ENCODE measurements at regions of chr11 and their contacts with region 1.

Region 1: GRCh38 chr11:77047007-77047927 is 13.1 kb downstream of the B3GNT6 start:
- DNase-seq: peak in 1 of 2 donors; percentile 91
- ATAC-seq: peak; percentile 84 to 97 (median 93)
- H3K4me3 ChIP-seq: peak overlapping the region in 8 of 10 donors; percentile 28 to 52 (median 42)
- H3K27ac ChIP-seq: peak overlapping the region in 2 of 10 donors; percentile 8 to 37
- H3K4me1 ChIP-seq: peaks cover 0 to 16% (median 6%) of the 10 kb centered on the region in 9 donors
- H3K27me3 ChIP-seq: peaks cover 0 to 35% (median 32%) of the 10 kb centered on the region in 7 donors
- CTCF ChIP-seq: peak; percentile 66 to 83 (median 75)

Region 2: GRCh38 chr11:77082838-77083562 is 35.7 kb after region 1 on chr11:
- intact Hi-C with region 1: loop called in 1 of 10 experiments (anchors 5 kb)
- DNase-seq: peak; percentile 54 to 62
- ATAC-seq: peak; percentile 42 to 87 (median 82)
- H3K4me3 ChIP-seq: peak overlapping the region in 3 of 10 donors; percentile 3 to 20 (median 14)
- H3K27ac ChIP-seq: peak overlapping the region in 9 of 10 donors; percentile 33 to 83 (median 60)
- H3K4me1 ChIP-seq: peaks cover 9 to 28% (median 18%) of the 10 kb centered on the region in 9 donors
- H3K27me3 ChIP-seq: no peaks in the 10 kb centered on the region
- CTCF ChIP-seq: no peak

Region 3: DNA sequence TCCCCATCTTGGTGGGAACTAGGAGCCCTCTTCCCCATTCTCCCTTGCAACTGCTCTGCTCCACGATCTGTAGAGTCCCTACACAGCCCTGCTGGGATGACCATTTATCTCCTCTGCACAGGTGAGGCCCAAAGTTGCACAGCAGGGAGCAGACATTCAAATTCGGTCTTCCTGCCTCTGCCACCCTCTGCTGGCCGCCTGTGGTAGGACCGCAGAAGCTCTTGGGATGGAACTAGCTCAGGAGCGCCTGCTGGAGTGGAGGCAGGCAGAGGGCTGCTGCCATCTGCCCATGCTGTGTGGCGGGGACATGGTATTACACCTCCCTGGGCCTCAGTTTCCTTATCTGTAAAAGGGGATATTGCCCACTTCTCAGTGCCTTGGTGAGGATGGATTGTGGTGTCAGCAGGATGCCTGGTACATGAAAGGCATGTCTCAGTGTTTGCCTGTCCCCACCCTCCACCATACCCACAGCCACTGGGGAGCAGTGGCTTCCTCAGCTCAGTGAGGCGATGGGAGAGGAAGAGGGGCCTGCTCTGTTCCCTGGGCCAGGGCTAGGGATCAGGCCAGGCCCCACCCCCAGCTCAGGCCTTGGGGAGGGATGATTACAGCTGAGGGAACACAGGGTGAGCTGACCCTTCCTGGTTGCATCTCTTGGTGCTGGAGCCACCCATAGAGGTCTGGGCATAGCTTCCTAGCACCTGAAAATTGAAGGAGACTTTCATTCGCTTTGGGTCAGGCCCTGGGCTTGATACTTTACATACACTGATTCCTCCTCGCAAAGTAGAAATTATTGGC is 44.1 kb after region 1 on chr11:
- intact Hi-C with region 1: loop called (anchors 1 to 5 kb)
- DNase-seq: peak; percentile 78 to 80
- ATAC-seq: peak; percentile 68 to 80 (median 78)
- H3K4me3 ChIP-seq: no peak overlapping the region
- H3K27ac ChIP-seq: no peak overlapping the region
- H3K4me1 ChIP-seq: peaks cover 0 to 8% (median 0%) of the 10 kb centered on the region in 9 donors
- H3K27me3 ChIP-seq: no peaks in the 10 kb centered on the region
- CTCF ChIP-seq: peak; percentile 80 to 94 (median 91)

Region 4: DNA sequence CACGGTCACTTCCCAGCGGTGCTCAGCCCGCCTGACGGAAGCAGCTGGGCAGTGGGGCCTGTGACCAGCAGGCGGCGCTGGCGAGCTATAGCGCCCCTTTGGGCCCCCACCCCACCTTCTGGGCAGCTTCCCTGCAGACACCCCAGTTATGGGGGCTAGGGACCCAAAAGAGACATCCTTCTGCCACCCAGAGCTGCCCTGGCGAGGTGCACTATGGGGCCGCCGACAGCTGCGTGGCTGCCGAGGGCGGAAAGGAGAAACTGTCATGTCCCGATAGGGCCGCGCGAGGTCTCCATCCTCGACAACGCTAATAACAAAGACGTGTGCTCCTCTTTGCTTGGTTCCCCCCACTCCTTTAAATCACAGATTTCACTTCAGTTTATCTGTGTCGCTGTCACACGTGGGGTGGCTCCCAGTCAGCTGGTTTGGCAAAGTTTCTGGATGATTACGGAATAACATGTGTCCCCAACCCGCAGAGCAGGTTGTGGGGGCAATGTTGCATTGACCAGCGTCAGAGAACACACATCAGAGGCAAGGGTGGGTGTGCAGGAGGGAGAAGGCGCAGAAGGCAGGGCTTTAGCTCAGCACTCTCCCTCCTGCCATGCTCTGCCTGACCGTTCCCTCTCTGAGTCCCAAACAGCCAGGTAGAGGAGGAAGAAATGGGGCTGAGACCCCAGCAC is 80.1 kb after region 1 on chr11:
- intact Hi-C with region 1: loop called in 1 of 10 experiments (anchors 10 kb)
- DNase-seq: peak; percentile 35 to 67
- ATAC-seq: peak; percentile 62 to 86 (median 74)
- H3K4me3 ChIP-seq: peak overlapping the region in 9 of 10 donors; percentile 8 to 56 (median 46)
- H3K27ac ChIP-seq: peak overlapping the region in 4 of 10 donors; percentile 2 to 53 (median 32)
- H3K4me1 ChIP-seq: peaks cover 6 to 43% (median 27%) of the 10 kb centered on the region in 9 donors
- H3K27me3 ChIP-seq: peaks cover 0 to 9% (median 0%) of the 10 kb centered on the region in 7 donors
- CTCF ChIP-seq: peak; percentile 96 to 100 (median 99)

Region 5: DNA sequence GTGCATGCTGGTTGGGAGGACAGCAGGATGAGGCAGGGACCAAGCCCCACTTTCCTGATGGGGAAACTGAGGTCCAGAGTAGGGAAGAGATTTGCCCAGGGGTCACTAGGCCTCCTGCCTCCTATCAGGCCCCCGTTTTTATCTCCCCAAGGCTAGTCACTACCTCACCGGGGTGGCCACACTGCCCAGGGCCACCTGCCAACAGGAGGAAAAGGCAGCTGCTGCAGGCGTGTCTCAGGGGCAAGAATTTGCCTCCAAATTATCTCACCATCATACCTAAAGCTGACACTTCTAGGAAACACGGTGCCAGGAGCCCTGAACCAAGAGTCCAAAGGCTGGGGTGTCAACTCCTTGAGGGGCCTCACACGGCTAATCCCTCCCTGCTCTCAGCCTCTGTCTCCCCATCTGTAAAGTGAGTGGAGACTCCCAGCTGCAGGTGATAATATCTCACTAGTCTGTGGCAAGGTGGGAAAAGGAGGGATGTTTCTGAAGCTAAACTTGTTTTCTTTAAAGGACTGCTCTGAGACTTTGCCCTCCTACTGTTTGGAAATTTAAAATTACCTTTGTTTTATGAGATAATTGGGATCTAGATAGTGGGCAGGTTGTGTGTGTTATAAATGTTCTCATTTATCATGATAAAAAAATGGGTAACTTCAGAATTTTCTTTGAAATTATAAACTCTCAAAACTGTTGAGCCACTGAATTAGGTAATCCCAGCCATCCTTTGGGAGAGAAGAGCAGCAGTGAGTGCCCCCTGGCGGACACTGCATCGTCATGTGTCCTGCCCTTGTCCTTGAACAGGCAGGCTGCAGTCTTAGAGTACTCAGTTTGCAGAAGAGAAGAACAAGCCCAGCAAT is 140.7 kb after region 1 on chr11:
- intact Hi-C with region 1: loop called in 9 of 10 experiments (anchors 2 to 10 kb)
- DNase-seq: peak; percentile 78 to 83
- ATAC-seq: peak; percentile 79 to 92 (median 86)
- H3K4me3 ChIP-seq: no peak overlapping the region
- H3K27ac ChIP-seq: no peak overlapping the region
- H3K4me1 ChIP-seq: no peaks in the 10 kb centered on the region
- H3K27me3 ChIP-seq: no peaks in the 10 kb centered on the region
- CTCF ChIP-seq: peak; percentile 68 to 94 (median 91)

Region 6: DNA sequence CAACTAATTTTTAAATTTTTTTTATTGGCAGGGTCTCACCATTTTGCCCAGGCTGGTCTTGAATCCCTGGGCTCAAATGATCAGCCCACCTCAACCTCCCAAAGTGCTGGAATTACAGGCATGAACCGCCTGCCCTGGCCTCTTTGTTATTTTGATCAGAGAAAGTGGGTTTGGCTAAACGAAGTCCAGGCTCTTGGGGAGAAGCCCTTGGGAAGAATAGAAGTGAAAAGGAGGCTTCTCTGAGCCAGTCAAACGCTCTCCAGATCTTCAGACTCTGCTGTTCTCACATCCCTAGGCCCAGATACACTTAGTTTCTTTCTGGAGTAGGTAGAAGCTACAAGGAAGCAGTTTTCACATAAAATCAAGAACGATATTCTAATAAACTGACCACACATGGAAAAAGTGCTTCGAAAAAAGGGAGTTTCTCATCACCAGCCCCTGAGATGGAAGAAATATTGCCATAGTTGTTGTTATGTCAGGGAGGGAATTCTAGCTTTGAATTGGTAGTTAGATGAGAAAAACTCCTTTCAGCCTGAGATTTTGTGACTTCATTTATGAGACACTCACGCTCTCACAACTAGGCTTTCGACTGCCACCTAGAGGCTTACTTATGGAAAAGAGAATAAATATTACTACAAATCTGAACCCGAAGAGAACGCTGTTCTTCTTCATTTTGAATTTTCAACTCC is 500.7 kb after region 1 on chr11:
- intact Hi-C with region 1: loop called in 1 of 10 experiments (anchors 10 kb)
- DNase-seq: peak in 1 of 2 donors; percentile 41
- ATAC-seq: peak in 2 of 8 donors; percentile 35 to 42
- H3K4me3 ChIP-seq: no peak overlapping the region
- H3K27ac ChIP-seq: no peak overlapping the region
- H3K4me1 ChIP-seq: peaks cover 0 to 8% (median 0%) of the 10 kb centered on the region in 9 donors
- H3K27me3 ChIP-seq: no peaks in the 10 kb centered on the region
- CTCF ChIP-seq: peak; percentile 21 to 74 (median 63)

Measured in heart right ventricle (tissue), 16 donors.